Activated T-helper 1 cell treated with anti-CD3 and anti-CD28 coated beads, Interleukin-12 subunit alpha, Interleukin-12 subunit beta, Interleukin-2, Interleukin-4 antibody, amounts not matched to agents 30 ng/mL and 10 ng/mL and 1 ng/mL, durations not matched to agents 14 hours and 24 hours and 36 hours (primary cell): ENCODE measurements at regions of chr20 and their contacts with region 1.

Region 1: DNA sequence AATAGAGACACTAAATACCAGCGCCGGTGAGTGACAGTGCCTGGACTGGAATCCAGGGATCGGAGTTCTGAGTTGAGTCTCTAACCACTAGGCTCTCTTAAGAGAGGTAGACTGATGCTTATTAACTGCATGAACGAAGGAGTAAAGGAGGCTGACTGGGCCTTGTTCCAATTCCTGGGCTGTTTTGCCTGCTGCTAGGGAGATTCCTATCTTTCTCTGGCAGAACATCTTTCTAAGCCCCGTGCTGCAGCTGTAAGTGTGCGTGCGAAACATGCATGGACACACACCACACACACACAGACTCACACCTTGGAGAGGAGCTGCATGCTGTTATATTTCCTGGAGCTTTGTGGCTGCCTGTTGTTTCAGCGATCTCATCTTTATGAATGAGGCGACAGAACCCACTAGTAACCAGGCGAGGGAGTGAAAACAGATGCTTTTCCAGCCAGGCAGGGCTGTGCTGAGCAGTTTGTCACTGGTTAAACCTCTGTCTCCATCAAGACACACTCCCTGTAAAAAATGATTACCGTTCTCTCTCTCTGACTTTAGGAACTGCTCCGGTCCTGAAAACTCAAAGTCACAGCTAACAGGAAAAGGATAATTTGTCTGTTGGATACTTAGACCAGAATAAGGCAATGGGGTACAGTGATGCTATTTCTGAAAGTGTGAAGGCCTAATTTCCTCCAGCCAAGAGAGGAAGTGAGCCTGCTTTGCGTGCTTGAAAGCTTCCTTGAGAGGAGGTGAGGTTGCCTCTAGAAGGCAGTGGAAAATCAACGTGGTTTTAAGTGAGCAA is 157.4 kb upstream of the ZNF217 start:
- DNase-seq: peak; percentile 51
- H3K4me3 Mint-ChIP-seq: peak overlapping the region; percentile 60
- H3K27ac Mint-ChIP-seq: peak overlapping the region; percentile 98
- H3K4me1 Mint-ChIP-seq: peaks cover 74% of the 10 kb centered on the region
- H3K27me3 Mint-ChIP-seq: no peaks in the 10 kb centered on the region

Region 2: GRCh38 chr20:53652090-53652858 is 98.7 kb before region 1 on chr20:
- intact Hi-C with region 1: loop called (anchors 2 kb)
- DNase-seq: no peak
- H3K4me3 Mint-ChIP-seq: peak overlapping the region; percentile 70
- H3K27ac Mint-ChIP-seq: peak overlapping the region; percentile 97
- H3K4me1 Mint-ChIP-seq: peaks cover 41% of the 10 kb centered on the region
- H3K27me3 Mint-ChIP-seq: no peaks in the 10 kb centered on the region

Region 3: DNA sequence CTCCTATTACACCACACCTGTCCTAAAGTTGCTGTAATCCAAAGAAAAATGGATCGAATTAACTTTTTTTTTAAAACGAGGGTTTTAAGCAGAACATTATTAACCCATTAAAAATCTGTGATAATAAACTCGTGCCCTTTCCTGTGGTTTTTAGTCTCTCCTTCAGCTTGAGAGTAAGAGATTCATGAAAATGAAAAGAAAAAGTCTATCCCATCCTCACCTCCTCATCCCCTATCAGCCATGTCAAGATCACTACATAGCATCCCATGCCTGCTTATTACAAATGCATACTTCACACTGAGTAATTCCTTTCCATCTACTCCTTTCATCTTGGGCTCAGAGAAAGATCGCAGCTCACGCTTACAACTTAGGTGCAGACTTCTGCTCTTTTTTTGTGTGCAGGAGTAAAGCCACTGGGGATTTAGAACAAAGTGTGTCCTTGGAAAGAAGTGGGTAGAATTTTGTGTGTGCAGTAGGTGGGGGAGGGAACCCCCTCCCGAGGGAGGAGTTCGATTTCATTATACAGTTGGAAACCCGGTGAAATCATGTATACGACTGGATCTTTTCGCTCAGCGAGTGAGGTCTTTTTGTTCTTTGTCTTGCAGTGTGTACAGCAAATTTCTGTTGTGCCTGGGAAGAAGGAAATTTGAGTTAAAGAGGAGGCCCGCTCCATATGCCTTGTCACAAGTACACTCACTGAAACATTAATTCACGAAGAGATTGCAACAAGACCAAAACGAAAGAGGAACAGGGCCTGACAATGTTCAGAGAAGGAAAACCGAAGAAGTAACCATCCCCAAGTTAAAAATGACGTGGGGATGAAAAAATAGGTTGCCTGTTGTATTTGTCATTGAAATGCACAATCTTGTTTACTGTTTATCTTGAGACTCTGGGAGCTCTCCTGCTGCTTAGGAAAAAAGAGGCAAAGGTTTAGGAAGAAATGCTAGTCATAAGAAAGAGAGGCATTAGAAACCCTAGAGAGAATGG is 10.9 kb before region 1 on chr20:
- intact Hi-C with region 1: loop called (anchors 1 kb)
- DNase-seq: peak; percentile 14
- H3K4me3 Mint-ChIP-seq: peak overlapping the region; percentile 82
- H3K27ac Mint-ChIP-seq: peak overlapping the region; percentile 93
- H3K4me1 Mint-ChIP-seq: peaks cover 72% of the 10 kb centered on the region
- H3K27me3 Mint-ChIP-seq: no peaks in the 10 kb centered on the region

Region 4: DNA sequence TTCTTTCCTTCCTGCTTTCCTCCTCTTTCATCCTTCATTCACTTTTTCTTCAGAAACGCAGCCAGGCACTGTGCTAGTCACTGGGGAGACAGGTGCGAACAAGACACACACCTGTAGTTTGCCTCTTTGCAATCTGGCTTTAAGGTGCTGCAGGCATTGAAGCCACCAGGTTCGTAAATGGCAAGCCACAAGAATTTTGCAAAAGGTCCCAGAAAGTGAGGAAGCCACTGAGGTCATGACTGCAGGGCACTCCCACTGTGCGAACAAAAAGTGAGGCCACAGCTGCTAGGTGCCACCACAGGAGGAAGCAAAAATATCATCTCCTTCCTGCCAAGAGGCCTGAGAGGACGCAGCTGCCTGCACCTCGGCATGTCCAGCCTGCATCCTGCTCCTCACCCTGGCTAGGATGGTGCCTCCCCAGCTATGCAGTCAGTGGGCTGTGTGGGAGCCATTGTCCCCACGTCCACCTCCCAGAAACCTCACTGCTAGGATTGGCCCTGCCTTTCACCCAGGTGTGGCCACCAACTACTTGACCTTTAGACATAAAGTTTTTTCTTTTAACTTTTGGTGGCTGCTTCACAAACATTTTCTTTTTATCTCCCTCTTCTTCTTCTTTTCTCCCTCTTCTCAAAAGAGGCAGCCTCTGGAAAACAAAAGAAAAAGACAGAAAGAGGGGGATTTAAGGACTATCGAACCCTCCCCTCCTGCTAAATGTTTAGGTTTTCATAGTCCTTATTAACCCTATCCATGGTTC is 88.6 kb after region 1 on chr20:
- intact Hi-C with region 1: loop called (anchors 1 kb)
- DNase-seq: peak; percentile 62
- H3K4me3 Mint-ChIP-seq: peak overlapping the region; percentile 80
- H3K27ac Mint-ChIP-seq: peak overlapping the region; percentile 96
- H3K4me1 Mint-ChIP-seq: peaks cover 72% of the 10 kb centered on the region
- H3K27me3 Mint-ChIP-seq: peaks cover 2% of the 10 kb centered on the region

Region 5: DNA sequence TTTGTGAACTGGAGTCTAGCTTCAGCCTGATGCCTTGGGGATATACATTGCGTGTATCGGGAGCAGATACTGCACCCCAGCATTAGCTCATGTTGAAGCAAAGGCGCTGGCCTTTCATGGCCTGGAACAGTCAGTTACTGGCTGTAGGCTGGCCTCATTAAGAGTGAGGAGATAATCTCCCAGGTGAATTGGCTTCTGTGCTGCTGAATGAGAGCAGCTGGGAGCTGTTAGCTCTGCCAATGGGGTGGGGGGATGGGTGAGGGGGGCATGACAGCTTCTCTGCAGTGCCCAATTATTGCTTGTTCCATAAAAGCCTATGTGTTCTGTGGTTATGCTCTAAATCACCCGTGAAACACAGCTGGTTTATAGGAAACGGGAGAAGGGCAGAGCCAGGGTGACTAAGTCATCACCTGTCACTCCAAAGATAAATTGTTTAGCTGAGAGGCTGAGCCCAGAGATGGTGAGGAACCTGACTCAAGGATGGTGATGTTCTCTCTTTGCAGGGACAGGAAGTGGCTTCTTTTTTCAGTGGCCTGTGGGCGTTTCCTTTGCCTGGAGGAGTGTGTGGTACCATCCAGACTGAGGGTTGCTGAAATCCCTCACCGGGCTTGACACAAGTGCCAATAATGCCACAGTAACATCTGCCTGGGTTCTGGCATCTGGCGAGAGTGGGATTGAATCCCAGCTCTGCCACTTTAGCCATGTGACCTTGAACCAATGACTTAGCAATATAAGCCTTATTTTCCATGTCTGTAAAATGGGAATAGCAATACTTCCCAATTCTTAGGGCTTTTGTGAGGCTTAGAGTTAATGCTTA is 148.5 kb after region 1 on chr20:
- intact Hi-C with region 1: loop called (anchors 1 kb)
- DNase-seq: peak; percentile 74
- H3K4me3 Mint-ChIP-seq: peak overlapping the region; percentile 69
- H3K27ac Mint-ChIP-seq: peak overlapping the region; percentile 87
- H3K4me1 Mint-ChIP-seq: peaks cover 56% of the 10 kb centered on the region
- H3K27me3 Mint-ChIP-seq: no peaks in the 10 kb centered on the region

Region 6: GRCh38 chr20:53939572-53940359 is 188.7 kb after region 1 on chr20:
- intact Hi-C with region 1: loop called (anchors 2 kb)
- DNase-seq: peak; percentile 54
- H3K4me3 Mint-ChIP-seq: no peak overlapping the region
- H3K27ac Mint-ChIP-seq: no peak overlapping the region
- H3K4me1 Mint-ChIP-seq: peaks cover 69% of the 10 kb centered on the region
- H3K27me3 Mint-ChIP-seq: no peaks in the 10 kb centered on the region